Spleen (tissue), 13 donors: ENCODE measurements at regions of chr10 and their contacts with region 1.

Region 1: DNA sequence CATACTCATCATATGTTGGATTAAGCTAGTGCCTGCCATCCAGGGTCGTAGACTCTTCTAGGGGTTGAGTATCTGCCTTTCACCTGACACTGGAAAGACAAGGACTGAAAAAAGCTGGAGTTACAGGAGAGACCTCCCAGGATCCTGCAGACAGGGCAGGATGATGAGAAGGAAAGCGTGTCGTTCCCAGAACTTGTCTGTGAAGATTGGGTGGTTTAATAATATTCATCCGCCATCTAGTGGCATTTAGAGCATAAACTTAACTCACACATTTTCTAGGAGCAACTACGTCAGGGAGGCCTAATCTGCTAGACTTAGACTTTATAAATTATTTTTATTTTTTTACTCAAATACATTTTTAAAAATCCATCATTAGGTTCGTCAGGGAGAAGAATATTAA is 59.6 kb downstream of the ADRB1 start:
- DNase-seq: no peak
- H3K4me3 ChIP-seq: no peak overlapping the region
- H3K27ac ChIP-seq: no peak overlapping the region
- H3K4me1 ChIP-seq: peaks cover 11 to 47% (median 32%) of the 10 kb centered on the region in 6 donors
- H3K27me3 ChIP-seq: peaks cover 0 to 26% (median 10%) of the 10 kb centered on the region in 7 donors
- CTCF ChIP-seq: peak in 10 of 11 experiments; percentile 21 to 74 (median 58)
- POLR2A ChIP-seq: no peak

Region 2: DNA sequence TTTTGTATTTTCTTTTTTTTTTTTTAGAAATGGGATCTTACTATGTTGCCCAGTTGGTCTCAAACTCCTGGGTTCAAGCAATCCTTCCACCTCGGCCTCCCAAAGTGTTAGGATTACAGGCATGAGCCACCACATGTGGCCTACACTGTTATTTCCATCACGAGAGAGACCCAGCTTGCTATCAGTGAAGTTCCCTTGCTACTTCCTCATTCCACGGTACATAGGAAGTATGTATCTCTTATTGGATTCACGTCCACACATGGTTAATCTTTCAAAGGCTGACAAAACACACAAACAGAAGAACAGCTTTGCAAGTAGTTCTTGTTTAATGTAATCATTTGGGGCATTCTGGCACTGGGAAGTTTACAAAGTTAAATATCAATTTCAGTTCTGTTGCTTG is 300.3 kb before region 1 on chr10:
- intact Hi-C with region 1: loop called (anchors 5 kb)
- DNase-seq: no peak
- H3K4me3 ChIP-seq: no peak overlapping the region
- H3K27ac ChIP-seq: no peak overlapping the region
- H3K4me1 ChIP-seq: peaks cover 0 to 10% (median 1%) of the 10 kb centered on the region in 6 donors
- H3K27me3 ChIP-seq: peaks cover 0 to 5% (median 0%) of the 10 kb centered on the region in 7 donors
- CTCF ChIP-seq: no peak
- POLR2A ChIP-seq: no peak